ENCODE measurements at regions of chr13 and their contacts with region 1.

Region 1: DNA sequence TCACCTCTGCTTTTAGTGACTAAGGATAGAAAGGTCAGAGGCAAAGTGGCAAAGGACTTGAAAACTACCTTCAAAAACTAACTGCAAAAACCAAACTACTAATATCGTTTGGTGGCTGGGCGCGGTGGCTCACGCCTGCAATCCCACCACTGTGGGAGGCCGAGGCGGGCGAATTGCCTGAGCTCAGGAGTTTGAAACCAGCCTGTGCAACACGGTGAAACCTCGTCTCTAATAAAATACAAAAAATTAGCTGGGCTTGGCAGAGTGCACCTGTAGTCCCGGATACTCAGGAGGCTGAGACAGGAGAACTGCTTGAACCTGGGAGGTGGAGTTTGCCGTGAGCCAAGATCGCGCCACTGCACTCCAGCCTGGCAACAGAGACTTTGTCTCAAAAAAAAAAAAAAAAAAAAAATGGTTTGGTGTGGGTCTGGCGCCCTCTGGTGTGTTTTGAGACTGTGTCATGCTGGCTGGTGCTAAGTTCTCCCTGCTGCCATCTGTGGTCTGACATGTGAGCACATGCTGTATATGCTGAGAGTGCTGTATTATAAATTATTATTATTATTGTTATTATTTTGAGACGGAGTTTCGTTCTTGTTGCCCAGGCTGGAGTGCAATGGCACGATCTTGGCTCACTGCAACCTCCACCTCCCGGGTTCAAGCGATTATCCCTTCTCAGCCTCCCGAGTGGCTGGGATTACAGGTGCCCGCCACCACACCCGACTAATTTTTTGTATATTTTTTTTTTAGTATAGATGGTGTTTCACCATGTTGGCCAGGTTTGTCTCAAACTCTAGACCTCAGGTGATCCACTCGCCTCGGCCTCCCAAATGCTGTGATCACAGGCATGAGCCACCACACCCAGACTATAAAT is 36.0 kb upstream of the RNF17 start:
- DNase-seq: peak; percentile 21 to 34
- ATAC-seq: peak; percentile 82 to 83
- H3K4me3 ChIP-seq: no peak overlapping the region
- H3K27ac ChIP-seq: no peak overlapping the region
- H3K4me1 ChIP-seq: no peaks in the 10 kb centered on the region
- H3K27me3 ChIP-seq: peaks cover 0 to 3% (median 0%) of the 10 kb centered on the region in 3 donors
- CTCF ChIP-seq: peak; percentile 22 to 60 (median 46)
- POLR2A ChIP-seq: no peak

Region 2: DNA sequence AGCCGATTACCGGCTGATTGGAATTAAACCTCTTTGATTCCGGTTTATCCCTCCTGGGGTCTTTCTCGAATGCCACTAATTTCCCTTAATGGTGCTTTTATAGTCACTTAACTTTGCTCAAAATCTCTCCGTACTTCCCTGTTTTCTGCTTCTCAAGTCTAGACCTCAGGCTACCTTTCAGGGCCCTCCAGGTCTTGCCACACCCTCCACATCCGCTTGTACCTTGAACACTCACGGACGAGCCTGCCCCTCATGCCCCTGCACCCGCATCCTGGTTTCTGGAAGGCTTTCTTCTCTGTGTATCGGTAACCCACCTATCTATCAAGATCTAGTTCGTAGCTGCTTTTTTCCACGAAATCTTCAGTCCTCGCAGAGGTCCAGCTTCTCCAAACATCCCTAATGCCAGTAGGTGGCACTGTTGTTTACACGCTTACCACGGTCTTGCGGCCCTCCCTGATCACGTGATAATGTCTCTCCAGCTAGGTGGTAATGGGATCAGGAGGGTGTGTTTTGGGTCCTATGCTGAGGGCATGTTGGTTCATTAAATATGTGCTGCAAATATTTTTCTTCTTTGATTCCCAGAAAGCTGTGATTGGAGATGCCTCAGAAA is 34.0 kb before region 1 on chr13:
- in situ Hi-C with region 1: no loop called
- intact Hi-C with region 1: loop called (anchors 1 kb)
- DNase-seq: peak in 1 of 2 donors; percentile 22
- ATAC-seq: peak; percentile 47 to 72
- H3K4me3 ChIP-seq: no peak overlapping the region
- H3K27ac ChIP-seq: no peak overlapping the region
- H3K4me1 ChIP-seq: no peaks in the 10 kb centered on the region
- H3K27me3 ChIP-seq: peaks cover 0 to 4% (median 0%) of the 10 kb centered on the region in 3 donors
- CTCF ChIP-seq: peak; percentile 24 to 64 (median 50)
- POLR2A ChIP-seq: no peak